Caco-2 (cell line): ENCODE measurements at regions of chr5 and their contacts with region 1.

Region 1: DNA sequence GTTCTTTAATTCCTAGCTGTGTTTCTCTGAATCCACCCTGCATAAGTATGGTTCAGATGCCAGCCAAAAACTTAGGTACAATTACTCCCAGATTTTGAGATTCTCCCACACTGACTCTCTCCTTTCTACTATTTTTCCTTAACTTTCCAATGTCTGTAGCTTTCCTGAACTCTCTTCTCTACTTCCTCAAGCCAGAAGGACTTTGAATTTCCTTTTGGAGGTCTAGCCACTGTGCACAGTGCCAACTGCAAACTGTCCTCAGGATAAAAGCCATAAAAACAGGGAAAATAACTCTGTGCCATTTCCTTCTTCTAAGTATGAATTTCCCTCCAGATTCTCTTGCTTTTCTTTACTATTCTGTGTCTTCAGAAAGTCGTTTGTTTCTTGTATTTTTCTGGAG is 157.2 kb downstream of the AP3B1 start:
- DNase-seq: no peak
- H3K4me3 ChIP-seq: no peak overlapping the region
- H3K4me3 Mint-ChIP-seq: no peak overlapping the region
- H3K27ac Mint-ChIP-seq: no peak overlapping the region
- H3K4me1 ChIP-seq: peaks cover 12% of the 10 kb centered on the region
- H3K4me1 Mint-ChIP-seq: peaks cover 15% of the 10 kb centered on the region
- H3K27me3 ChIP-seq: no peaks in the 10 kb centered on the region
- H3K27me3 Mint-ChIP-seq: no peaks in the 10 kb centered on the region
- CTCF ChIP-seq: no peak

Region 2: GRCh38 chr5:78050888-78051287 is 86.4 kb before region 1 on chr5:
- CTCF ChIA-PET with region 1: no interaction called
- POLR2A ChIA-PET with region 1: no interaction called
- intact Hi-C with region 1: loop called (anchors 5 kb)
- DNase-seq: no peak
- H3K4me3 ChIP-seq: no peak overlapping the region
- H3K4me3 Mint-ChIP-seq: no peak overlapping the region
- H3K27ac Mint-ChIP-seq: no peak overlapping the region
- H3K4me1 ChIP-seq: no peaks in the 10 kb centered on the region; the same call in 1 of the 2 replicates
- H3K4me1 Mint-ChIP-seq: no peaks in the 10 kb centered on the region
- H3K27me3 ChIP-seq: no peaks in the 10 kb centered on the region
- H3K27me3 Mint-ChIP-seq: no peaks in the 10 kb centered on the region
- CTCF ChIP-seq: no peak

Region 3: DNA sequence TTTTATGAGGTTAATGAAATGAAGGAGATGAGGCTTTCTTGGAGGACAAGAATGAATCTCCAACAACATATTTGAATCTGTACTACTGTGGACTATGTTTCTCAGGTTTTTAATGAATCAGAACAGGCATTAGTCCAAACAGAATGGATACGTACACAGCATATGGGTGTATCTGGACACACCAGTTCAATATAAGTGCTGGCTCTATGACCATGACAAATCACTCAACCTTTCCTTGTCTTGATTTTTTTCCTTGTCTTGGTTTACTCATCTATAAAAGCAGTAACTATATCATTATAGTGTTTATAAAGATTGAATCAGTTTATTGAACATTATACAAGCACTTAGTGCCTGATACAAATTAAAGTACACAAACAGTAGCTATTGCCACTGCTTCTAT is 53.1 kb after region 1 on chr5:
- CTCF ChIA-PET with region 1: no interaction called
- POLR2A ChIA-PET with region 1: no interaction called
- intact Hi-C with region 1: loop called (anchors 5 kb)
- DNase-seq: no peak
- H3K4me3 ChIP-seq: no peak overlapping the region
- H3K4me3 Mint-ChIP-seq: no peak overlapping the region
- H3K27ac Mint-ChIP-seq: no peak overlapping the region
- H3K4me1 ChIP-seq: no peaks in the 10 kb centered on the region
- H3K4me1 Mint-ChIP-seq: no peaks in the 10 kb centered on the region
- H3K27me3 ChIP-seq: no peaks in the 10 kb centered on the region
- H3K27me3 Mint-ChIP-seq: no peaks in the 10 kb centered on the region
- CTCF ChIP-seq: no peak

Region 4: GRCh38 chr5:78245136-78245535 is 107.8 kb after region 1 on chr5:
- CTCF ChIA-PET with region 1: no interaction called
- POLR2A ChIA-PET with region 1: no interaction called
- intact Hi-C with region 1: loop called (anchors 5 kb)
- DNase-seq: peak; percentile 73 to 87
- H3K4me3 ChIP-seq: no peak overlapping the region
- H3K4me3 Mint-ChIP-seq: peak overlapping the region; percentile 68
- H3K27ac Mint-ChIP-seq: peak overlapping the region; percentile 80
- H3K4me1 ChIP-seq: peaks cover 39% of the 10 kb centered on the region
- H3K4me1 Mint-ChIP-seq: peaks cover 54% of the 10 kb centered on the region
- H3K27me3 ChIP-seq: no peaks in the 10 kb centered on the region
- H3K27me3 Mint-ChIP-seq: no peaks in the 10 kb centered on the region
- CTCF ChIP-seq: no peak